CD8-positive, alpha-beta memory T cell (primary cell): ENCODE measurements at regions of chr17 and their contacts with region 1.

Region 1: GRCh38 chr17:48892940-48893645 is 506 bp downstream of the ATP5MC1 start:
- DNase-seq: peak in 1 of 5 donors; percentile 52
- H3K4me3 ChIP-seq: peak overlapping the region; percentile 71
- H3K4me3 Mint-ChIP-seq: peak overlapping the region; percentile 77 to 94 (median 92)
- H3K27ac ChIP-seq: peak overlapping the region; percentile 84
- H3K27ac Mint-ChIP-seq: peak overlapping the region; percentile 85 to 99 (median 98)
- H3K4me1 ChIP-seq: peaks cover 20% of the 10 kb centered on the region
- H3K4me1 Mint-ChIP-seq: peaks cover 24 to 31% (median 29%) of the 10 kb centered on the region in 3 donors
- H3K27me3 ChIP-seq: no peaks in the 10 kb centered on the region
- H3K27me3 Mint-ChIP-seq: no peaks in the 10 kb centered on the region

Region 2: DNA sequence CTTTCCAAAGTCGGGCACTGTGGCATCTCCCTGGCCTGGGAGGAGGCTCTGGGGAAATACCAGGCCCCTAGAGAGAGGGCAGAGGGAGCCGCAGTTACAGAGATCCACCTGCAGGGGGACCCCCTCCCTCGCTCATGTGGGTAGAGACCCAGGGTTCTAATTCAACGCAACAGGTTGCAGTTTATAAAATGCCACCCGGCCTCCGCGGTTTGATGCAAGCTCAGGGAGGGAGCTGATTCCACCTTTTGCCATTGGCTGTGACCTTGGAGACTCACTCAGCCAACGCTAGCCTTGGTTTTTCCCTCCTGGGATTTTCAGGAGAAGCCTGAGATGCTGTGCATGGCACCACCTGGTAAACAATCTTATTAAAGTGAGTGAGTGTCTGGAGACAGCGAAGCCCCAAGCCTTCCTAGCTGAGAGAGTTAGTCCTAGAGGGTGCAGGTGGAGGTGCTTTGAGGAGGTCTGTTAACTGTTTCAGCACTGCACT is 88.1 kb before region 1 on chr17:
- CTCF ChIA-PET with region 1: interaction called, 11 read pairs
- POLR2A ChIA-PET with region 1: interaction called, 4 read pairs
- DNase-seq: peak; percentile 45 to 67 (median 57)
- H3K4me3 ChIP-seq: no peak overlapping the region
- H3K4me3 Mint-ChIP-seq: peak overlapping the region in 1 of 7 donors; percentile 55
- H3K27ac ChIP-seq: no peak overlapping the region
- H3K27ac Mint-ChIP-seq: no peak overlapping the region
- H3K4me1 ChIP-seq: no peaks in the 10 kb centered on the region
- H3K4me1 Mint-ChIP-seq: peaks cover 0 to 2% (median 0%) of the 10 kb centered on the region in 3 donors
- H3K27me3 ChIP-seq: peaks cover 5% of the 10 kb centered on the region
- H3K27me3 Mint-ChIP-seq: peaks cover 6 to 14% of the 10 kb centered on the region in 2 donors

Region 3: GRCh38 chr17:48908047-48908843 is 15.2 kb after region 1 on chr17 and contains the start of gene UBE2Z:
- CTCF ChIA-PET with region 1: interaction called, 13 read pairs
- POLR2A ChIA-PET with region 1: interaction called, 35 read pairs
- DNase-seq: peak; percentile 79 to 90 (median 84)
- H3K4me3 ChIP-seq: peak within 1 kb of the TSS; percentile 87
- H3K4me3 Mint-ChIP-seq: peak within 1 kb of the TSS; percentile 88 to 99 (median 93)
- H3K27ac ChIP-seq: peak within 1 kb of the TSS; percentile 91
- H3K27ac Mint-ChIP-seq: peak within 1 kb of the TSS; percentile 87 to 99 (median 98)
- H3K4me1 ChIP-seq: peaks cover 29% of the 10 kb centered on the region
- H3K4me1 Mint-ChIP-seq: peaks cover 45 to 56% (median 53%) of the 10 kb centered on the region in 3 donors
- H3K27me3 ChIP-seq: no peaks in the 10 kb centered on the region
- H3K27me3 Mint-ChIP-seq: no peaks in the 10 kb centered on the region
- total RNA-seq, gene UBE2Z: 100 to 103 TPM

Region 4: DNA sequence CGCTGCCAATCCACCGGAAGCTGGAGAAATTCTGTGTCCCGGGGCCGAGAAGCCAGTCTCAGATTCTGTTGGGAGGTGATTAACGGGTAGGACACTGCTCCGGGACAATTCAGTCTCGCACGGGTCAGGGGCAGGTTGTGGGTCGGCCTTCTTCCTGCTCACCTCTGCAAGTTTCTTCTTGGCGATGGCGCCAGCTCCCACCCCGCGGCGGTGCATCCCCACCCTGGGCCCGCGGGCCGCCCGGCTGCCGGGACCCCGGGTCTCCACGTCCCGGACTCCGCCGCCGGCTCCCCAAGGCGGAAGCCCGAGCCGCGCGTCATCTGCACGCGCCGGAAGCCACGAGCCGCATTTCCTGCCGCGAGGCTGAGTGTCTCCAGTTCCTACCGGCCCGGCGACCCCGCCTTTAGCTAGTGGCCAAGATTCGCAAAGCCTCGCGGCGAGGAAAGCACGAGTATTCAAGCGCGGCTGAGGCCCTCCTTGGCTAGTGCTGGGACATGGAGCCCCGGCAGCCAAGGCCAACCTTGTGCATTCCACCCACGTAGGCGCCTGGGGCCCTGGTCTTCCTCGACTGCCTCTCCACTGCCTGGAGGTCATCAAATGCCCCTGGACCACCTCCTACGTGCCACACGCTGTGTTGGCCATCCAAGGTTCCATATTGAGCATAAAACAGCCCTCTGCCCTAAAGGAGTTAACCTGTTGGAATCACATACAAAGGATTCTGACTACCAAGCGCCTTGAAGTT is 51.6 kb after region 1 on chr17 and contains the start of gene SNF8:
- CTCF ChIA-PET with region 1: interaction called, 4 read pairs
- POLR2A ChIA-PET with region 1: interaction called, 14 read pairs
- DNase-seq: peak; percentile 88 to 93 (median 89)
- H3K4me3 ChIP-seq: peak within 1 kb of the TSS; percentile 99
- H3K4me3 Mint-ChIP-seq: peak within 1 kb of the TSS; percentile 92 to 97 (median 96)
- H3K27ac ChIP-seq: peak within 1 kb of the TSS; percentile 96
- H3K27ac Mint-ChIP-seq: peak within 1 kb of the TSS; percentile 93 to 100 (median 97)
- H3K4me1 ChIP-seq: peaks cover 17% of the 10 kb centered on the region
- H3K4me1 Mint-ChIP-seq: peaks cover 14 to 28% (median 25%) of the 10 kb centered on the region in 3 donors
- H3K27me3 ChIP-seq: no peaks in the 10 kb centered on the region
- H3K27me3 Mint-ChIP-seq: peaks cover 5 to 7% of the 10 kb centered on the region in 2 donors
- total RNA-seq, gene SNF8: 151 to 161 TPM

Region 5: GRCh38 chr17:48997083-48997826 is 104.2 kb after region 1 on chr17 and contains the start of gene IGF2BP1:
- CTCF ChIA-PET with region 1: no interaction called
- POLR2A ChIA-PET with region 1: no interaction called
- DNase-seq: no peak
- H3K4me3 ChIP-seq: peak within 1 kb of the TSS; percentile 25
- H3K4me3 Mint-ChIP-seq: peak within 1 kb of the TSS in 6 of 7 donors; percentile 57 to 85 (median 69)
- H3K27ac ChIP-seq: peak within 1 kb of the TSS; percentile 76
- H3K27ac Mint-ChIP-seq: peak within 1 kb of the TSS in 3 of 8 donors; percentile 63 to 72 (median 68)
- H3K4me1 ChIP-seq: peaks cover 32% of the 10 kb centered on the region
- H3K4me1 Mint-ChIP-seq: peaks cover 19 to 34% (median 30%) of the 10 kb centered on the region in 3 donors
- H3K27me3 ChIP-seq: peaks cover 68% of the 10 kb centered on the region
- H3K27me3 Mint-ChIP-seq: peaks cover 75 to 92% of the 10 kb centered on the region in 2 donors
- total RNA-seq, gene IGF2BP1: 0.24 to 0.28 TPM